CD4-positive, alpha-beta memory T cell (primary cell): ENCODE measurements at regions of chr7 and their contacts with region 1.

Region 1: GRCh38 chr7:27774717-27775328 is 34.9 kb downstream of the TAX1BP1 start:
- DNase-seq: peak in 2 of 5 donors; percentile 7 to 11
- H3K4me3 ChIP-seq: no peak overlapping the region
- H3K4me3 Mint-ChIP-seq: no peak overlapping the region
- H3K27ac ChIP-seq: no peak overlapping the region
- H3K27ac Mint-ChIP-seq: no peak overlapping the region
- H3K4me1 ChIP-seq: no peaks in the 10 kb centered on the region
- H3K4me1 Mint-ChIP-seq: peaks cover 20 to 38% (median 31%) of the 10 kb centered on the region in 4 donors
- H3K27me3 ChIP-seq: no peaks in the 10 kb centered on the region
- H3K27me3 Mint-ChIP-seq: no peaks in the 10 kb centered on the region

Region 2: GRCh38 chr7:27763983-27764516 is 10.8 kb before region 1 on chr7:
- CTCF ChIA-PET with region 1: interaction called, 10 read pairs
- POLR2A ChIA-PET with region 1: no interaction called
- intact Hi-C with region 1: no loop called
- DNase-seq: no peak
- H3K4me3 ChIP-seq: no peak overlapping the region
- H3K4me3 Mint-ChIP-seq: no peak overlapping the region
- H3K27ac ChIP-seq: no peak overlapping the region
- H3K27ac Mint-ChIP-seq: no peak overlapping the region
- H3K4me1 ChIP-seq: no peaks in the 10 kb centered on the region
- H3K4me1 Mint-ChIP-seq: peaks cover 12 to 27% (median 24%) of the 10 kb centered on the region in 4 donors
- H3K27me3 ChIP-seq: no peaks in the 10 kb centered on the region
- H3K27me3 Mint-ChIP-seq: no peaks in the 10 kb centered on the region